A549 (cell line): ENCODE measurements at regions of chr14 and their contacts with region 1.

Region 1: DNA sequence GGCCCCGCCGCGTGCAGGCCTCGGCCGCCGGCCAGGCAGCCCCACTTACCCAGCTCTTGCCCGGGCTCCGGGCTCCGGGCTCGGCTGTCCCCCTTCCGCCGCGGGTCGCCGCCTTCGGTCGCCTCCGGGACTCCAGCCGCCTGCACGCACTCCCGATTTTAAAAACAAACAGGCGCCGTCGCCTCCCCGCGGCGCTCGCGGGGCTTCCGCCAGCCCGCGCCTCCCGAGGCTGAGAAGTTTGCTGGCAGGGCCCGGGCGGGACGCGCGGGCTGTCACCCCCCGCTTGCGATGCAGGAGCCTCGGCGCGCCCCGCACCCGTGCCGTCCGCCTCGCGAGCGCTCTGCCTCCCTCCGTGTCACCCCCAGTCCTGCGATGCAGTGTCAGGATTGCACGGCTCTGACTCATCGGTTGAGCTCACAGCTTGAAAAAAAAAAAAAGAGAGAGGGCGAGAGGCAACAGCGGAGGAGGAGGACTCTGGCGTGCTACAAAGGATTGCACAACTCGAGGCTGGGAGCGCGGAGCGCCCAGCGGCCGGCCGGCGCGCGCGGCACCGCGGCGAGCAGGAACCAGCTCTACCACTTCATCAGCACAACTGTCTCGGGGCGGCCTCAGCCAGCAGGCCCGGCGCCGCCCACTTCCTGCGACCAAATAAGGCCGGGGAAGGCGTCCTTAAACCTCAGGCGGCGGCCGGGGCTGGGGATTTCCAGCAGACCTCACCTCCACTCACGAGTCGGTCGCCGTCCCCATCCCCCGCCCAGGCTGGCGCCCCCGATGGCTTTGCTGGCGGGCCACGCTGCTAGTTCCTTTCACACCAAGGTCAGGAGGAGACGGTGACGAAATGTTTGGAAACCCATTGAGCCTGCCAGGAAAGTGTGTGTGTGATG is 45.8 kb upstream of the PNMA1 start:
- DNase-seq: peak; percentile 95 to 98
- ATAC-seq: peak; percentile 82 to 91
- H3K4me3 ChIP-seq: peak overlapping the region; percentile 81
- H3K27ac ChIP-seq: peak overlapping the region; percentile 88 to 99
- H3K4me1 ChIP-seq: peaks cover 82% of the 10 kb centered on the region
- CTCF ChIP-seq: no peak
- EP300 ChIP-seq: peak in 1 of 2 experiments; percentile 41; a peak in 2 of 5 replicates
- POLR2A ChIP-seq: peak; percentile 50
- RAD21 ChIP-seq: peak in 1 of 2 experiments; percentile 33; a peak in 1 of 5 replicates

Region 2: GRCh38 chr14:73741386-73741875 is 18.5 kb before region 1 on chr14:
- CTCF ChIA-PET with region 1: interaction called, 117 read pairs
- POLR2A ChIA-PET with region 1: no interaction called
- DNase-seq: peak in 1 of 2 experiments; percentile 61
- ATAC-seq: peak; percentile 33 to 72
- H3K4me3 ChIP-seq: peak overlapping the region; percentile 19
- H3K27ac ChIP-seq: peak overlapping the region; percentile 81 to 86
- H3K4me1 ChIP-seq: peaks cover 69% of the 10 kb centered on the region
- CTCF ChIP-seq: no peak
- EP300 ChIP-seq: no peak
- POLR2A ChIP-seq: no peak
- RAD21 ChIP-seq: no peak

Region 3: DNA sequence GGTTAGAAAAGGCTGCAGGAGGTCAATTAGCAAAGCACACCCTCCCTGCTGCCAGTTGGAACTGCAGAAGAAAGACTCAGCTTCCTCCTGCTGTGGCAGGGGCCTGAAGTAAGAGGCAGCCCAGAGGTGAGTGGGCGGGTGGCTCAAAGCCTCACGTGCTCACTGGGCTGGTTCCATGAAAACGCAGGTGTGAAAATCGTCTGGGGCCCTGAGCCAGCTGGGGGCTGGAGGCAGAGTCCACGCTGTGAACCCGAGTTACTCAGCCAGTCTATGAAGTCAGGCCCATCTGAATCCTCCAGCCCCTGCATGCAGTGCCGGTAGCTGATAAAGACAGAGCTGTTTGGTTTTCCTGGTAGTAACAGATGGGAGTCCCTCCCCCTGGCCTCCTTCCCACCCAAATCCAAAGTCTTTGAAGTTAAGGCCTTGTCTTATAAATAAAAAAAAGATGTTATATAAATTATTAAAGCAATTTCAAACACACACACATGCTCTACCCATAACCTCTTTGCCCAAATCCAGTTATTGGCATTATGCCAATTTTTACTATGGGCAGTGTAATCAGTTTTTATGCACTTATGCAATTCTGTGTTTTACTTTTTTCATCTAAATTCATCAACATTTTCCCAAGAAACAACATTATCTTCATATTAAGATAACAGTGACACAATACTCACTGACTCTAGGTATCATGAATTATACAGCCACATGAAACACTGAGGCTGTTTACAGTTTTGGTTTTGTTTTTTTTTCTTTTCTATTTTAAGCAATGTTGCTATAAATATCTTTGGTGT is 12.1 kb after region 1 on chr14:
- CTCF ChIA-PET with region 1: interaction called, 22 read pairs
- POLR2A ChIA-PET with region 1: interaction called, 4 read pairs
- DNase-seq: no peak
- ATAC-seq: peak; percentile 11 to 40; a peak in 3 of 6 replicates
- H3K4me3 ChIP-seq: no peak overlapping the region
- H3K27ac ChIP-seq: 0 out of 6 replicates have a peak overlapping the region, but pooled peaks of 1 of the 2 experiments have one; percentile 13
- H3K4me1 ChIP-seq: peaks cover 19% of the 10 kb centered on the region
- CTCF ChIP-seq: no peak
- EP300 ChIP-seq: no peak
- POLR2A ChIP-seq: no peak
- RAD21 ChIP-seq: no peak

Region 4: GRCh38 chr14:73777401-73777800 is 17.4 kb after region 1 on chr14:
- CTCF ChIA-PET with region 1: interaction called, 73 read pairs
- POLR2A ChIA-PET with region 1: interaction called, 4 read pairs
- DNase-seq: no peak
- ATAC-seq: peak; percentile 45 to 63; a peak in 3 of 6 replicates
- H3K4me3 ChIP-seq: no peak overlapping the region
- H3K27ac ChIP-seq: no peak overlapping the region
- H3K4me1 ChIP-seq: peaks cover 1% of the 10 kb centered on the region
- CTCF ChIP-seq: no peak
- EP300 ChIP-seq: no peak
- POLR2A ChIP-seq: no peak
- RAD21 ChIP-seq: no peak

Region 5: DNA sequence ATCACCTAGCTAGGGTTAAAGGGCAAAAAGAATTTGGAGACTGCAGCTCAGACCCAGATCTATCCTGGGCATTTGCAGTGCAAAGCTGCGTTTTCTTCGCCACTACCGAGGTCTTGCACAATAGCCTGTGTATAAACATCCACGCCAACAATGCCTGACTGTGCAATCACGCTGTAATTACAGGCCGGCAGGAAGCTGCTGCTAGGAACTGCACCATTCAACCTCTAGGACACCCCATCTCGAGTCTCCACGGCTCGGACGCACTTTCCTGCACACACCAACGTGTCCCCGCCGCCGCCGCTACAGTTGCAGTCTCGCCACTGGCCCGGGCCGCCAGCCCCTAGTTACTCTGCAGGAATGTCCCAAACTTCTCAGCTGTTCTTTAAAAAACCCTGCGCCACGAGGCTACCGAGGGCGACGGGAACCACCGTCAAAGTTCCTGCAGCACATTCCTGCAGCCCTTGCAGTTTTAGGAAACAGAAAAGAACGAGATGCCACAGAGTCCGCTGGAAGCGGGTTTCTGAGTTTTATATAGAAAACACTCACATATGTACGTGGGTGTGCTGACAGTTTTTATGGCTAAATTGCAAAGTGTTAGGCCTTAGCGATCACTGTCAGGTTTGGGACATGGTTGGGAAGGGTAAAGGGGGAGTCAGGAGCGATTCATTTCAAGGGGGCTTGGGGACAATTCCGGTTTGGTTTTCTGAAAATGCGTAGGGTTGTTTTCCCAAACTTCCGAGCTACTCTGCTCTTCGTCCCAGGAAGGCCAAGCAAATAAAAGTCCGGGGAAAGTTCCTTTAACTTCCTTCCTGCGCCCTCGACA is 26.1 kb after region 1 on chr14:
- CTCF ChIA-PET with region 1: interaction called, 73 read pairs
- POLR2A ChIA-PET with region 1: interaction called, 70 read pairs
- DNase-seq: peak; percentile 60 to 88
- ATAC-seq: peak; percentile 86 to 90
- H3K4me3 ChIP-seq: peak overlapping the region; percentile 79
- H3K27ac ChIP-seq: peak overlapping the region; percentile 95 to 100
- H3K4me1 ChIP-seq: peaks cover 33% of the 10 kb centered on the region
- CTCF ChIP-seq: no peak
- EP300 ChIP-seq: no peak
- POLR2A ChIP-seq: peak; percentile 36; the same call in 1 of the 2 replicates
- RAD21 ChIP-seq: 0 out of 5 replicates have a peak, but pooled peaks of 1 of the 2 experiments have one; percentile 23

Region 6: GRCh38 chr14:73825551-73826188 is 65.7 kb after region 1 on chr14:
- CTCF ChIA-PET with region 1: interaction called, 27 read pairs
- POLR2A ChIA-PET with region 1: interaction called, 3 read pairs
- DNase-seq: peak; percentile 83 to 89
- ATAC-seq: peak; percentile 93 to 94
- H3K4me3 ChIP-seq: no peak overlapping the region
- H3K27ac ChIP-seq: no peak overlapping the region
- H3K4me1 ChIP-seq: peaks cover 10% of the 10 kb centered on the region
- CTCF ChIP-seq: peak; percentile 83
- EP300 ChIP-seq: no peak
- POLR2A ChIP-seq: no peak
- RAD21 ChIP-seq: peak; percentile 90 to 93

Region 7: DNA sequence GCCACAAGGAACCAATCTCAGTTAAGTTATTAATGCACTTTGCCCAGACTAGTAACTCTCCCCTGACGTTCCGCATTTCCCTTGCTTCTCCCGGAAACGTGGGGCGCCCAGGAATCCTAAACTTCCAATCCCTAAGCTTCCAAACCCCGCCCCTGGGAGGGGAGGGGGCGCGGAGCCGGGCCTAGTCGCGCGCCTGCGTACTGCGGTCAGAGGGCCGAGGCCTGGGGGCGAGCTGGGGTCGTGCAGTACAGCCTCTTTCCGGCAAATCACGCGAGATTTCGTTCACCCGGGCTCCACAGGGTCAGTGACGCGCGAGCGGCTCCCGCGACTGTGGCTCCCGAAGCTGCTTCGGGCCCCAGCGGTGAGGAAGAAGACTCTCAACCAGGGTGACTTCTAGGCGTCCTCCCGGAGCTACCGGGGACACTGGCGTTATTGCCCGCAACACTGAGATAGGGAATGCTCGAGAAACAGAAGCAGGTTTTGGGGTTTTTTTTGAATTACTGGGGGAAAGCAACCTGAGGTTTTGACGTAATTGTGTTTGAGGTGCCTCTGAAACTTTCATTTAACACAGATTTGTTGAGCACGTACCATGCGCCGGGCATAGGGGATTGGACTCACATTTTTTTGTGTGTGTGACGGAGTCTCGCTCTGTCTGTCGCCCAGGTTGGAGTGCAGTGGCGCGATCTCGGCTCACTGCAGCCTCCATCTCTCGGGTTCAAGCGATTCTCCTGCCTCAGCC is 91.9 kb after region 1 on chr14 and contains the start of gene PTGR2:
- CTCF ChIA-PET with region 1: interaction called, 5 read pairs
- POLR2A ChIA-PET with region 1: interaction called, 12 read pairs
- DNase-seq: peak; percentile 98 to 99
- ATAC-seq: peak; percentile 92 to 94
- H3K4me3 ChIP-seq: peak within 1 kb of the TSS; percentile 74
- H3K27ac ChIP-seq: peak within 1 kb of the TSS; percentile 93 to 94
- H3K4me1 ChIP-seq: peaks cover 27% of the 10 kb centered on the region
- CTCF ChIP-seq: no peak
- EP300 ChIP-seq: no peak
- POLR2A ChIP-seq: peak; percentile 83
- RAD21 ChIP-seq: 0 out of 5 replicates have a peak, but pooled peaks of 1 of the 2 experiments have one; percentile 9
- polyA plus RNA-seq, gene PTGR2: 17.7 and 30.5 TPM in 2 replicates